PC-3 (cell line): ENCODE measurements at regions of chr11 and their contacts with region 1.

Region 1: DNA sequence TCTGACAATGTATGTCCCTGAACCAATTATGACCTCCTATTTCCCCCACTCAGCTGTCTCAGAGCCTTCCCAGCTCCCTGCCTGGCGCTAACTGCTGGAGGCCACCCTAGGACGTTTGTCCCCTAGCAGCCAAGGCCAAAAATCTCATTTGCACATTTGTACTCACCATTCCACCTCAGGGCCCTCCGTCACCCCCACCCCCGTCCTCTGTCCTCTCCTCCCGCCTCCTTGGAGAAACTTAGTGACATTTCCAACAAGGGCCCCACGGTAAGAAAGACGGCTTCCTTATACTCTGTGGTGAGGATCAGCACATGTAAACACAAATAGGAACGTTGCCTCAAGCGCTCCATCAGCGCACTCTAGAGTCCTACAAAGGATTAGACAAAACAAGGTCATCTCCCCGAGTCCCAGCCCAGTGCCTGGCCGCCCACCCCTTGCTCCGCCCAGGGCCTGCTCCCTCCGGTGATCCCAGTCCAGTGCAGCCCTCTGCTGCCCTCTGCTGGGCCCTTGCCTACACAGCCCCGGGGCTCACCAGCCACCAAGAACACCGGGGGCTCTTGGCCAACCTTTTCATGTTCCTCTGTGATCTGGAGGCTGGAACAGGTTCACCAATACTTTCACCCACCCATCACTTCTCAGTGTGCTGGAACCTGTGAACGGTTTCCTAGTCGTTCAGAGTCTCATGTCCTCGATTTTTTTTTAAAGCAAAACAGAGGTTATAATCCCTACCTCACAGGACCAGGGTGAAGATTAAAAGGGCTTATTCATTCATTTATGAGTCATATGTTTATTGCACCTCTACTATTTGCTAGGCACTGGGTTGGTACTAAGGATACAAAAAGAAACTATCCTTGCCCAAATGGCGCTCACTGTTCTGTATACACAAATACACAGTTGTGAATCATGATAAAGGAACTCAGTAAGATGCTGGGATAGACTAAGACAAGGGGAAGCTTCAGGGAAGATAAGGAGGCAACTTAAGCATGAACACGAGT is 15.3 kb upstream of the CTR9 start:
- DNase-seq: peak; percentile 93
- ATAC-seq: peak; percentile 93
- H3K4me3 ChIP-seq: peak overlapping the region; percentile 66
- H3K27ac ChIP-seq: peak overlapping the region; percentile 88
- H3K4me1 ChIP-seq: peaks cover 11% of the 10 kb centered on the region
- H3K27me3 ChIP-seq: no peaks in the 10 kb centered on the region
- CTCF ChIP-seq: peak; percentile 97

Region 2: DNA sequence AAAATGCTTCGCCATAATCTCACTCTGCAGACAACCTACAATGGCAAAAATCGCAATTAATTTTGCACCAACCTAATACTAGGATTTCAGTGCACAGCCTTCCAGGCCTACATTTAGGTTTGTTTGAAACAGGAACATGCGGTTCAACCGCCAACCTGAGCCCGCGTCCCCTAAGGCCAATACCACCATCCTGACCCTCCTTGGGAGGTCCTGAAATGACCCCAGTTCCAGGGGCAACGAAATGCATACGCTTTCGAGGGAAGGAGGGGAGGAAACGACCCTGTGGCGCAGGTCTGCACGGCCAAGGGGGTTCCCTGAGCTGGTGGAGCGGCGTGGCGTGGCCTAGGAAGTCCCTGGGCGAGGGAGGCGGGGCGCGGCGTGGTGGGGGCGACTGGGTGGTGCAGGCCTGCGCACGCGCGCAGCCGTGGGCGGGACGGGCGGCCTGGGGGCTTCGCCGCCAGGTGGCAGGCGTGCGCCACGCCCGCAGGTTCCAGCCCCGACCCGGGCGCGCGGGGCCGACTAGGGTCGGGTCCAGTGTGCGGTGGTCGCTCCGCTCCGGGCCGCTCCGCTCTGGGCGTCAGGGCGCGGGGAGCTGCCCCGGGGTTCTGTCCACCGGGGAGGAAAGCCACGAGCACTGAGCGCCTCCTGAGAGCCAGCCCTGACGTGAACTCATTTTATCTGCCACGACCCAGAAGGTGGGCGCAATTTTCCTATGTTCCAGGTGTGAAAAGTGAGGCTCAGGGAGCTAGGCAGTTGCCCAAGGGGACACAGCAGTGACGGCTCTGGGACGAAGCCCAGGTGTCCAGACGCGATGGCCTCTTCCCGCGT is 977.8 kb before region 1 on chr11:
- CTCF ChIA-PET with region 1: no interaction called
- POLR2A ChIA-PET with region 1: no interaction called
- intact Hi-C with region 1: loop called (anchors 10 kb)
- DNase-seq: peak; percentile 76
- ATAC-seq: peak; percentile 39
- H3K4me3 ChIP-seq: peak overlapping the region; percentile 87
- H3K27ac ChIP-seq: peak overlapping the region; percentile 17; the same call in 1 of the 2 replicates
- H3K4me1 ChIP-seq: peaks cover 42% of the 10 kb centered on the region
- H3K27me3 ChIP-seq: no peaks in the 10 kb centered on the region
- CTCF ChIP-seq: peak; percentile 66

Region 3: DNA sequence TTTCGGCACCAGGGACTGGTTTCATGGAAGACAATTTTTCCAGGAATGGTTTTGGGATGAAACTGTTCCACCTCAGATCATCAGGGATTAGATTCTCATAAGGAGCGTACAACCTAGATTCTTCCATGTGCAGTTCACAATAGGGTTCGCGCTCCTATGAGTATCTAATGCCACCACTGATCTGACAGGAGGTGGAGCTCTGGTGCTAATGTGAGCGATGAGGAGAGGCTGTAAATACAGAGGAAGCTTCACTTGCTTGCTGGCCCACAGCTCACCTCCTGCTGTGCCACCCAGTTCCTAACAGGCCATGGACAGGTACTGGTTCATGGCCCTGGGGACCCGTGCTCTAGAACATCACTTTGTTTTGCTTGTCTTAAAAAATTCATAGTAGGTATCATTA is 322.5 kb before region 1 on chr11:
- CTCF ChIA-PET with region 1: no interaction called
- POLR2A ChIA-PET with region 1: no interaction called
- intact Hi-C with region 1: loop called (anchors 1 kb)
- DNase-seq: peak; percentile 62
- ATAC-seq: peak; percentile 96
- H3K4me3 ChIP-seq: no peak overlapping the region
- H3K27ac ChIP-seq: no peak overlapping the region
- H3K4me1 ChIP-seq: 0 out of 2 replicates have a peak, but pooled peaks cover 4% of the 10 kb centered on the region
- H3K27me3 ChIP-seq: no peaks in the 10 kb centered on the region
- CTCF ChIP-seq: peak; percentile 57

Region 4: DNA sequence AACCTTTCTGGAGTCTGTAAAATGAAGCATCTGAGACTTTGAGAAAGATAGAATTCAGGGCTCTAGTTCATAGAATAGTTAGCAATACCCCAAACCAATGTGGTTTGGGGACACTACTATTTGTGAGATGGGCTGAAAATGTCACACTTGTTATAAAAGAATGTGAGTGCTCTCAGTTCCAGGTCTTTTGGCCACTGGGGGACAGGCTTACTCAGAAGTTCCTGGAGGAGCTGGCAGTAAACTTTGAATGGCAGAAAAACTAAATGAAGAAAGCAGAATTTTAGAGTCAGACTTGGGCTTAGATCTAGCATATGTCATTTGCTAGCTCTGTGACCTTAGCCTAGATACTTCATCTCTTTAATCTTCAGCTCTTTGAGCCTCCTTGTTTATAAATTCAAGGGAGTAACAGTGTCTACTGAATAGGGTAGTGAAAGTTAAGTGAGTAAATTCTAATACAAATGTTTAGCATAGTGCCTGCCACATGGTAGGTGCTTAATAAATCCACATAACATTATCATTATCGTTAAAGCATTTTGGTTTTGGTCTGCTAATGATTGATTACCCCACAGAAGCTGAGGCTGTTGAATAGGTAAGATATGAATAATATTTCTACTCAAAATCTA is 171.0 kb before region 1 on chr11:
- CTCF ChIA-PET with region 1: no interaction called
- POLR2A ChIA-PET with region 1: no interaction called
- intact Hi-C with region 1: loop called (anchors 2 kb)
- DNase-seq: peak; percentile 33
- ATAC-seq: peak; percentile 23; the same call in 1 of the 2 replicates
- H3K4me3 ChIP-seq: no peak overlapping the region
- H3K27ac ChIP-seq: no peak overlapping the region
- H3K4me1 ChIP-seq: peaks cover 18% of the 10 kb centered on the region
- H3K27me3 ChIP-seq: no peaks in the 10 kb centered on the region
- CTCF ChIP-seq: peak; percentile 51; the same call in 1 of the 2 replicates

Region 5: GRCh38 chr11:10653926-10654810 is 81.6 kb before region 1 on chr11:
- CTCF ChIA-PET with region 1: no interaction called
- POLR2A ChIA-PET with region 1: no interaction called
- intact Hi-C with region 1: loop called (anchors 1 kb)
- DNase-seq: peak; percentile 62
- ATAC-seq: peak; percentile 80
- H3K4me3 ChIP-seq: no peak overlapping the region
- H3K27ac ChIP-seq: no peak overlapping the region
- H3K4me1 ChIP-seq: peaks cover 31% of the 10 kb centered on the region
- H3K27me3 ChIP-seq: no peaks in the 10 kb centered on the region
- CTCF ChIP-seq: peak; percentile 86

Region 6: GRCh38 chr11:10664496-10664895 is 71.3 kb before region 1 on chr11:
- CTCF ChIA-PET with region 1: no interaction called
- POLR2A ChIA-PET with region 1: no interaction called
- intact Hi-C with region 1: no loop called
- DNase-seq: no peak
- ATAC-seq: no peak
- H3K4me3 ChIP-seq: no peak overlapping the region
- H3K27ac ChIP-seq: no peak overlapping the region
- H3K4me1 ChIP-seq: peaks cover 27% of the 10 kb centered on the region
- H3K27me3 ChIP-seq: no peaks in the 10 kb centered on the region
- CTCF ChIP-seq: no peak